Caco-2 (cell line): ENCODE measurements at regions of chr12 and their contacts with region 1.

Region 1: DNA sequence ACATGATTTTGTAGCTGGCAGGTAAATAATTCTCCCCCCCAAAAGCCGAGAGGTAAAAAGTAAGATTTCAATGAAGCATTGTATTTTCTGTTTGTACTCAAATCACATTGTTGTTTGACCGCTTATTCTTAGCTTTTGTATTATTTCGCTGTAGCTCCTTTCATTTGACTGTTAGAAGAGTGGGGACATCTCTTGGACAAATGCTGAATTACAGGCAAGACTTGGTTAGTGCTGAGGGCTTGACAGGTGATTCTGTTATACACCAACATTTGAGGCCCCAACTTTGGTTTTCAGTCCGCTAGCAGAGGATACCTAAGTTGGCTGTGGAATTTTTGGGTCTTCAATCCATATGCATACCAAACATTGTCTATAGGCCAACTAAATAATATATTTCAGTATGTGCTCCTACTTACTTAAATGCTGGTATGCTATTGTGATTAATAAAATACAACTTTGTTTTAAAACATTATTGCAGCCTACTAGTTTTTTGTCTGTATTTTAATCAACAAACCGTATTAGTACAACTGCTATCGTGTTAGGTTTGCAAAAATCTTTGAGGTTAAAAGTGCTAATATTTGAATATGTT is 102.2 kb downstream of the ERC1 start:
- DNase-seq: peak in 1 of 2 experiments; percentile 78
- H3K4me3 ChIP-seq: no peak overlapping the region
- H3K4me3 Mint-ChIP-seq: no peak overlapping the region
- H3K27ac Mint-ChIP-seq: no peak overlapping the region
- H3K4me1 ChIP-seq: peaks cover 6% of the 10 kb centered on the region; the same call in 1 of the 2 replicates
- H3K4me1 Mint-ChIP-seq: peaks cover 17% of the 10 kb centered on the region
- H3K27me3 ChIP-seq: no peaks in the 10 kb centered on the region
- H3K27me3 Mint-ChIP-seq: no peaks in the 10 kb centered on the region
- CTCF ChIP-seq: peak; percentile 84 to 88

Region 2: GRCh38 chr12:575948-576612 is 517.2 kb before region 1 on chr12:
- CTCF ChIA-PET with region 1: interaction called, 18 read pairs
- POLR2A ChIA-PET with region 1: no interaction called
- intact Hi-C with region 1: loop called (anchors 10 kb)
- DNase-seq: peak; percentile 86 to 96
- H3K4me3 ChIP-seq: no peak overlapping the region
- H3K4me3 Mint-ChIP-seq: peak overlapping the region; percentile 55
- H3K27ac Mint-ChIP-seq: peak overlapping the region; percentile 67
- H3K4me1 ChIP-seq: peaks cover 52% of the 10 kb centered on the region
- H3K4me1 Mint-ChIP-seq: peaks cover 36% of the 10 kb centered on the region
- H3K27me3 ChIP-seq: no peaks in the 10 kb centered on the region
- H3K27me3 Mint-ChIP-seq: no peaks in the 10 kb centered on the region
- CTCF ChIP-seq: peak; percentile 96 to 100

Region 3: DNA sequence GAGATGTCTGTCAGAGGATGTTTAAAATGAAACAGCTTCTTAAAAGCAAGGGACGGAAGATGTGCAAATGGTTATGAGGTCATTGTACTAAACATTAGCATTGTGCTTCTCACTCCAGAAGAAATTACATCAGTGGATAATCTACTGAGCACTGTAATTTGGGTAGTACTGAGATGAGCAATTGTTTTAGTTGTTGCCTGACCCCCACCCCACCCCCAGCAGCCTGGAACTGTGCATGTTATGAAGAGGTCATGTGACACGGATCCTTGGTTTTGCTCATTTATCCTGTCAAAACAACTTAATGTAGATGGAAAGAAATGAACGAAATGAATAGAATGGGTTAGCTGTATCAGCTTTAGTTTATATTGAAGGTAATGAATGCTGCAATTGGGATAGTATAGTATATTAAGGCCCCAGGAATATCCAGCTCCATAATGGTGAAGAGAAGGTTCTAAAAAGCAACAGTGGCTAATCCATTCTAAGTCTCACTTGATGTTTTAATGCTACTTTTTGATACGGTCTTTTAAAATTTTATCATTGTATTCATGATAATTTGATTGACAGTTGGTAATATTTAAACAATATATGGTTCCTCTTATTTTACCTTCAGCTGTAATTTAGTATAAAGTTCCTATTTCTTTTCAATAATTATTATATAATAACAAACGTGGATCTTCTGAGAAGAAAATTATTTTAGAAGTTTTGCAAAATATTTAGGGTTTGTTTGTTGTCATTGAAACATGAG is 282.4 kb before region 1 on chr12:
- CTCF ChIA-PET with region 1: no interaction called
- POLR2A ChIA-PET with region 1: no interaction called
- intact Hi-C with region 1: loop called (anchors 10 kb)
- DNase-seq: no peak
- H3K4me3 ChIP-seq: no peak overlapping the region
- H3K4me3 Mint-ChIP-seq: no peak overlapping the region
- H3K27ac Mint-ChIP-seq: no peak overlapping the region
- H3K4me1 ChIP-seq: peaks cover 9% of the 10 kb centered on the region
- H3K4me1 Mint-ChIP-seq: peaks cover 17% of the 10 kb centered on the region
- H3K27me3 ChIP-seq: no peaks in the 10 kb centered on the region
- H3K27me3 Mint-ChIP-seq: no peaks in the 10 kb centered on the region
- CTCF ChIP-seq: no peak

Region 4: DNA sequence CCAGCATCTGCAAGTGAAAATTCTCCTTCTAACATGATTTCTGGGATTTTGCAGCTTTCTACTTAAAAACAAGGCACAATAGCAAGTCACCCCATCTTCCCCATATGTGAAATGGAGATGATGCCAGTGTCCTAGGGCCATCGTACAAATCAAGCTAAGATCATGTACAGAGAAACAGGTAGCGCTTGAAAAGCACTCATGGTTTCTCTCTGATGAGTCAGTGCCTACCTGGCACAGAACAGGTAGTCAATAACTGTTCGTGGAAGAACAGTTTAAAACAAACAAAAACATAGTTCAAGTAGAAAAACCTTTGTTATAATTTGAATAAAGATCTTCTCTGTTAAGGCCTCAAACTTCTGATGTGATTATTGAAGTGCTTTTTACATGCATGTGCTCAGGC is 190.7 kb before region 1 on chr12:
- CTCF ChIA-PET with region 1: no interaction called
- POLR2A ChIA-PET with region 1: interaction called, 10 read pairs
- intact Hi-C with region 1: no loop called
- DNase-seq: no peak
- H3K4me3 ChIP-seq: no peak overlapping the region
- H3K4me3 Mint-ChIP-seq: no peak overlapping the region
- H3K27ac Mint-ChIP-seq: no peak overlapping the region
- H3K4me1 ChIP-seq: no peaks in the 10 kb centered on the region
- H3K4me1 Mint-ChIP-seq: no peaks in the 10 kb centered on the region
- H3K27me3 ChIP-seq: no peaks in the 10 kb centered on the region
- H3K27me3 Mint-ChIP-seq: no peaks in the 10 kb centered on the region
- CTCF ChIP-seq: no peak

Region 5: GRCh38 chr12:1117970-1118563 is 24.8 kb after region 1 on chr12:
- CTCF ChIA-PET with region 1: interaction called, 25 read pairs
- POLR2A ChIA-PET with region 1: no interaction called
- intact Hi-C with region 1: no loop called
- DNase-seq: peak; percentile 72 to 79
- H3K4me3 ChIP-seq: no peak overlapping the region
- H3K4me3 Mint-ChIP-seq: no peak overlapping the region
- H3K27ac Mint-ChIP-seq: no peak overlapping the region
- H3K4me1 ChIP-seq: no peaks in the 10 kb centered on the region
- H3K4me1 Mint-ChIP-seq: peaks cover 4% of the 10 kb centered on the region
- H3K27me3 ChIP-seq: no peaks in the 10 kb centered on the region
- H3K27me3 Mint-ChIP-seq: no peaks in the 10 kb centered on the region
- CTCF ChIP-seq: peak; percentile 97 to 99